Sciatic nerve (tissue), 2 donors: ENCODE measurements at regions of chr11 and their contacts with region 1.

Region 1: GRCh38 chr11:46352063-46352841 is 5.0 kb downstream of the DGKZ start:
- DNase-seq: no peak
- ATAC-seq: peak; percentile 44

Region 2: GRCh38 chr11:47093541-47093940 is 741.3 kb after region 1 on chr11:
- intact Hi-C with region 1: loop called (anchors 5 kb)
- DNase-seq: no peak
- ATAC-seq: no peak

Region 3: GRCh38 chr11:47361419-47361818 is 1009.2 kb after region 1 on chr11:
- intact Hi-C with region 1: loop called (anchors 10 kb)
- DNase-seq: no peak
- ATAC-seq: no peak